Mammary epithelial cell (primary cell): ENCODE measurements at regions of chr17 and their contacts with region 1.

Region 1: DNA sequence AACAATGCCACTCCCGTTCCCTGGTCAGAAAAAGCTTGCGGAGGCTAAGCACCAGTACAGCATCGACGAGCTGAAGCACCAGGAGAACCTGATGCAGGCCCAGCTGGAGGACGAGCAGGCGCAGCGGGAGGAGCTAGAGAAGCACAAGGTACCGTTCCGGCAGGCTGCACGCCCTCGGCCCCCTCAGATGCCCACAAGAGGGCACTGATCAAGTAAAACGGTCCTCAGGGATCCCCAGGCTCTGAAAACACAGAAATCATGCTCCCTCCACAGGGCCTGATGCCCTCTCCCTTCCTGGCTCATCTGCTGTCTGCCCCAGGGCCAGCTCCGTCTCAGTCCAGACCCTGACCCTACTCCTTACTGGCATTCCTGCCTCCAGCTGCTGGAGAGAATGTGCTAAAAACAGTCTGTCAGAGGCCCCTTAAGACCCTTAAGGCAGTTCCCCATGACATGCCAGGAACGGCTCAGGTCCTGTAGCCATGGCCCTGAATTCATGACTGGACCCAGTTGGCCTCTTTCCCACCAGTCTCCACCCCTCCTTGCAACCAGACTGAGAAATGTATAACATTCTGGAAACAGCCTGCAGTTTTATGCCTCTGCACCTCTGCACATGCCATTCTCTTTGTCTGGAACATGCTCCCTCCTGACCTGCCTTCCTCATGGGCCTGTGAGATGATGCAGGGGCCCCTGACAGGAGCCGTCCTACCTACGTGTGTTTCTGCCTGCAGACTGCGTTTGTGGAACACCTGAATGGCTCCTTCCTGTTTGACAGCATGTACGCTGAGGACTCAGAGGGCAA is 21.8 kb downstream of the DRC3 start:
- DNase-seq: no peak
- H3K4me3 ChIP-seq: no peak overlapping the region
- H3K27ac ChIP-seq: no peak overlapping the region
- H3K4me1 ChIP-seq: peaks cover 14% of the 10 kb centered on the region
- H3K27me3 ChIP-seq: no peaks in the 10 kb centered on the region
- CTCF ChIP-seq: peak in 1 of 2 donors; percentile 14

Region 2: DNA sequence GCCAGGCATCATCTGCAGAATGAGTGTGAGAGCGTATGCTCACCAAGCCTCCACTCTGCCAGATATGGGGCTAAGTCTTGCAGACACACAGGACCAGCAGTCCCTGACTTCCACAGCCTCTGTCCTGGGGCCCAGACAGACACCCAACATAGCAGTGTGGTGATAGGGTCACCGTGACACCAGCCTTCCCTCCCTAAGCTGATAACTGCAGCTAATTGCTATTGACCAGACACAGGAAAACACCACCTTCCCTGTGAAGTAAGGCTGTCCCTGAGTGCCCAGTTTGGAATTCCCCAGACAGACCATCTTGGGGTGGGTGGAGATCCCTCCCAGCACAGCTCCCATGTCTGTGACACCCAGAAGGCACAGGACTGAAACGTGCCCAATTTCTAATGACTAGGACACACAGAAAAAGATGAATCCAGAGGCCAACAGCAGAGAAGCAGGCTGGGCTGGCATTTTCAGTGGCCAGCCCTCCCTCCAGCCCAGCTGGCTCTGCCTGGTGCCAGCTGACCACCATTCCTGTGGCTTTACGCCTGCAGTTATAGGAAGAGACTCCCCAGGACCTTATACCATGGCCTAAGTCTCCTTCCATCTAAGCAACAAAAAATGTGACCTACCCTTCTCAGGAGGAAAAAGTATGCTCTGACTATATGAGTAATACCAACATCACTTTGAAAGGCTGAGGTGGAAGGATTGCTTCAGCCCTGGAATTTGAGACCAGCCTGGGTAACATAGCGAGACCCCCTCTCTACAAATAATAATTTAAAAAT is 14.2 kb after region 1 on chr17:
- CTCF ChIA-PET with region 1: no interaction called
- dilution Hi-C with region 1: no loop called
- in situ Hi-C with region 1: no loop called
- intact Hi-C with region 1: loop called (anchors 2 kb)
- DNase-seq: peak; percentile 80
- H3K4me3 ChIP-seq: no peak overlapping the region
- H3K27ac ChIP-seq: peak overlapping the region; percentile 16
- H3K4me1 ChIP-seq: peaks cover 17% of the 10 kb centered on the region
- H3K27me3 ChIP-seq: no peaks in the 10 kb centered on the region
- CTCF ChIP-seq: no peak

Region 3: DNA sequence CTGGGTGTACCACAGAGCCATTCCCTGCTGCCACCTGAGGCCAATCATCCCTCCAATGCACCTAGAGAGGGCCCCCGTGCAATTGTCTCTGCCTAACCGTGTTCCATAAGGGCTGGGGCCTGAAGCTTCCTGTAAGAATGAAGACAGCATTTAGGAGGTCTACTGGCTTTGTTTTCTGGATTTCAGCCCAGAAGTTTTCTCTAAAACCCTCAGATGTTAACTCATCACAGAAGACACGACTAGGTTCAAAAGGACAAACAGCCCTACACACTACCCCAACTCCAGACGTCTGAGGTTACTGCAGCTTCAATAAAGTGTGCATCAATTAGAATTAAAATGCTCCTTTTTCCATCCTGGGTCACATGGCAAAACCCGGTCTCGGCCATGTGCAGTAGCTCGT is 82.5 kb after region 1 on chr17:
- CTCF ChIA-PET with region 1: no interaction called
- dilution Hi-C with region 1: loop called (anchors 5 kb)
- in situ Hi-C with region 1: no loop called
- intact Hi-C with region 1: no loop called
- DNase-seq: no peak
- H3K4me3 ChIP-seq: no peak overlapping the region
- H3K27ac ChIP-seq: no peak overlapping the region
- H3K4me1 ChIP-seq: no peaks in the 10 kb centered on the region
- H3K27me3 ChIP-seq: no peaks in the 10 kb centered on the region
- CTCF ChIP-seq: no peak